ENCODE measurements at regions of chr15 and their contacts with region 1.

Region 1: GRCh38 chr15:34209421-34210282 is at the start of gene KATNBL1:
- DNase-seq: peak; percentile 98
- ATAC-seq: peak; percentile 96
- H3K4me3 Mint-ChIP-seq: peak within 1 kb of the TSS; percentile 89
- H3K27ac Mint-ChIP-seq: peak within 1 kb of the TSS; percentile 87
- H3K4me1 Mint-ChIP-seq: peaks cover 21% of the 10 kb centered on the region
- H3K27me3 Mint-ChIP-seq: no peaks in the 10 kb centered on the region
- total RNA-seq, gene KATNBL1: 41.5 to 56.5 TPM

Region 2: DNA sequence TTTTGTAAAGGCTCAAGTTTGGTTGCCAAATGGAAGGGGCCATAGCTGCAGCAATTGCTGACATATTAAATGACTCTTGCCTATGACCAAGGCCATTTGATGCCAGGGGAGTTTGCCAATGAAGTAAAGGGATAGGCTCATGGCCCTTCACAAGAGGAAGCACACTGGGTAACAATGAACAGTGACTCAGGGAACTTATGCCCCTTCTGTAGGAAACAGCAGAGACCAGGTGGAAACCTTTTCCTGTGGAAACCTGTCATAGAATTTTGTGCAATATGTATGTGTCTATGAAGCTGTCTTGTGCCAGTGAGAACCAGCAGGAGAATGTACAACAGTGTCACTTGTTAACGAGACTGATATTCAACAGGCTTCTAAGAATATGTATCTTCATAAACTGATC is 145.2 kb before region 1 on chr15:
- CTCF ChIA-PET with region 1: interaction called, 60 read pairs
- DNase-seq: no peak
- ATAC-seq: peak; percentile 9
- H3K4me3 Mint-ChIP-seq: no peak overlapping the region
- H3K27ac Mint-ChIP-seq: no peak overlapping the region
- H3K4me1 Mint-ChIP-seq: peaks cover 24% of the 10 kb centered on the region
- H3K27me3 Mint-ChIP-seq: no peaks in the 10 kb centered on the region

Region 3: DNA sequence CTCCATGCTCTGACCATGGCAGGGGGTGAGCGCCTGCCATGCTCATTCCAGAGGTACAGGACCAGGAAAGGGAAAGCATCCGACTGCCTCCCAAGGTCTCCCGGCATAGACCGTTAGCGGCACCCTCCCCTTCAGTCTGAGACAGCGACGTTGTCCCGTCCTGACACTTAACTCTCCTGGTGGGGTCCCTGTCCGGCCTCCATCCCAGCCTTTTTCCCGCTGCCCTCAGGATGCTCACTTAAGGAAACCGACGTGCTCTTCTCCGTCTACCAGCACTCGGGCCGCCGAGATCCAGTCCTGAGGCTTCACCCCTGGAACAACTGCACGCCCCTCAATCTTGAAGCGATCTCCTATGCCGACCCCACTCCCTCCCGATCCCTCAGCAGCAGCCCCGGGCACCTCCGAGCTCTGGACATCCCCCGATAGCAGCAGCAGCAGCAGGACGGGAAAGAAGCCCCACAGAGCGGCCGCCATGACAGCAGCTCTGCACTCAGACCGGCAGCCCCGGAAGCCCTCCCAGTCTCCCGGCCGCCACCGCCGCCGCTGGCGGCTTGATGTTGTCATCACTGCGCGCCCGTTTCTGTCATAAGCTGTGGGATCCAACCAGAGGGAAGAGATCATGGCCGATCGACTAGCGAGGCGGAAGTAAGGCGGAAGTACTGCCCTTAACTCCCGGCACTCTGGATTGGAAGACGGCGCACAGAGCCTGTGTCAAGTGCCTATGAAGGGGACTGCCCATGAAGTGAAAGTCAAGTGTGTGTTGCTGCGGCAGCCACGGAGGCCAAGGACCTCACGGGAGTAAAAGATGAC is 108.1 kb before region 1 on chr15 and contains the starts of genes EMC7 and PGBD4:
- CTCF ChIA-PET with region 1: interaction called, 12 read pairs
- DNase-seq: peak; percentile 99
- ATAC-seq: peak; percentile 99
- H3K4me3 Mint-ChIP-seq: peak within 1 kb of the TSS; percentile 100
- H3K27ac Mint-ChIP-seq: peak within 1 kb of the TSS; percentile 100
- H3K4me1 Mint-ChIP-seq: peaks cover 39% of the 10 kb centered on the region
- H3K27me3 Mint-ChIP-seq: no peaks in the 10 kb centered on the region
- total RNA-seq, gene EMC7: 66.2 to 76.5 TPM
- total RNA-seq, gene PGBD4: 3.8 to 5.2 TPM

Region 4: DNA sequence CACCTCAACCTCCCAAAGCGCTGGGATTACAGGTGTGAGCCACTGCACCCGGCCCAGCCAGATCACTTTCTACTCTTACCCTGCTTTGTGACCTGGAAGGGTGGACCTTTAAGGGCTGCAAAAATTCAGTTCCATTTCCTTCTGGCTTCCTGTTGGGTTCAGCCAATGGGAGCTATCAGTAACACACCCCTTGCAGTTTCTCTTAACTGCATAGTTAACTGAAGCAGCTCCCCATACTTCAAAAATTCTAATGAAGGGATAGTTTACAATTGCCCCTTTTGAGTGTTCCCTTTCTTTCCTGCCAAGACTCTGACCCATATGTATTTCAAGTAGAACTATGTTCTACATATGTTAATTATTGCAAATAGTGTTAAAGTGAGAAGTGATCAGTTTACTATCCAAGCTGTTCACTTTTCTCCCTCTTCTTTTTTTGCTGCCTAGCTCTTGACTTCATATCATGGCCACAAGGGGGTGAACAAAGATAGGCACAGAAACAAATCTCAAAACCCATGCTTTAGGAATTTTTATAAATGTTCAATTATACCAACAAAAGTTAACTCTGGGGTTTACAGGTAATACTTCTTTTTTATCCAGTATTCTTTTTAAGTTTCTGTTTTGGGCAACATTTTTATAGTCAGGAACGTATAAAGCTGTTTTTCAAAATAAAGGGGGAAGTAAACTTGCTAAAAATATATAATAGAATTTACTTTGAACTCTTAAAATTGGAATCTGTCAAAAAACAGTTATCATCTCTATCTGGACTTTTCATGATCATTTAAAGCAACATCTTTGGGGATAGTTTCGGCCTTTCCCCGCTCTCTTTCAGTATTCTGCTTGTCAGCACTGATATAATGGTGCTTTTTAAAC is 99.6 kb before region 1 on chr15:
- CTCF ChIA-PET with region 1: interaction called, 28 read pairs
- DNase-seq: no peak
- ATAC-seq: peak; percentile 58
- H3K4me3 Mint-ChIP-seq: no peak overlapping the region
- H3K27ac Mint-ChIP-seq: no peak overlapping the region
- H3K4me1 Mint-ChIP-seq: peaks cover 3% of the 10 kb centered on the region
- H3K27me3 Mint-ChIP-seq: peaks cover 3% of the 10 kb centered on the region

Region 5: GRCh38 chr15:34188711-34189110 is 20.9 kb before region 1 on chr15:
- CTCF ChIA-PET with region 1: no interaction called
- DNase-seq: no peak
- ATAC-seq: no peak
- H3K4me3 Mint-ChIP-seq: no peak overlapping the region
- H3K27ac Mint-ChIP-seq: no peak overlapping the region
- H3K4me1 Mint-ChIP-seq: peaks cover 4% of the 10 kb centered on the region
- H3K27me3 Mint-ChIP-seq: no peaks in the 10 kb centered on the region

Region 6: GRCh38 chr15:34223904-34224596 is 14.4 kb after region 1 on chr15:
- CTCF ChIA-PET with region 1: interaction called, 21 read pairs
- DNase-seq: no peak
- ATAC-seq: peak; percentile 15
- H3K4me3 Mint-ChIP-seq: peak overlapping the region; percentile 97
- H3K27ac Mint-ChIP-seq: peak overlapping the region; percentile 96
- H3K4me1 Mint-ChIP-seq: peaks cover 29% of the 10 kb centered on the region
- H3K27me3 Mint-ChIP-seq: no peaks in the 10 kb centered on the region

Region 7: GRCh38 chr15:34587717-34588674 is 378.3 kb after region 1 on chr15:
- CTCF ChIA-PET with region 1: interaction called, 10 read pairs
- DNase-seq: peak; percentile 80
- ATAC-seq: peak; percentile 42
- H3K4me3 Mint-ChIP-seq: peak overlapping the region; percentile 77
- H3K27ac Mint-ChIP-seq: peak overlapping the region; percentile 63
- H3K4me1 Mint-ChIP-seq: peaks cover 17% of the 10 kb centered on the region
- H3K27me3 Mint-ChIP-seq: peaks cover 22% of the 10 kb centered on the region